ENCODE measurements at regions of chr4 and their contacts with region 1.

Region 1: DNA sequence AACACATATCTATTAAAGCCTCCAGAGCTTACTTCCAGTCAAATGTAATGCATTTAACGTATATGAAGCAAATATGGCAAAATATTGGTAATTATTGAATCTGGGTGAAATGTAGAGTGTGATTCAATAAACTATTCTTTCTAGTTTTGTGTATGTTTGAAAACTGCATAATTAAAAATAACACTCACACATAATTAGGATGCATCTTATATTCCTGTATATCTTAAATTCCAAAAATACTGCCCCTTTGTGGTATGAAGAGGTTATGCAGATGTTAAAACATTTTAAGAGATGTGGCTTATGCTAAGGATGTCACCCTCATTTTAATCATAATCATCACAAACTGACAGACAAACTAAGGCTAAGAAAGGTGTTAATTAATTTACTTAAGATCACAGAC is 182.9 kb downstream of the COX18 start:
- DNase-seq: peak; percentile 21
- H3K4me3 ChIP-seq: no peak overlapping the region
- H3K27ac ChIP-seq: no peak overlapping the region
- H3K4me1 ChIP-seq: no peaks in the 10 kb centered on the region
- H3K27me3 ChIP-seq: no peaks in the 10 kb centered on the region
- CTCF ChIP-seq: peak; percentile 4 to 25
- POLR2A ChIP-seq: no peak

Region 2: DNA sequence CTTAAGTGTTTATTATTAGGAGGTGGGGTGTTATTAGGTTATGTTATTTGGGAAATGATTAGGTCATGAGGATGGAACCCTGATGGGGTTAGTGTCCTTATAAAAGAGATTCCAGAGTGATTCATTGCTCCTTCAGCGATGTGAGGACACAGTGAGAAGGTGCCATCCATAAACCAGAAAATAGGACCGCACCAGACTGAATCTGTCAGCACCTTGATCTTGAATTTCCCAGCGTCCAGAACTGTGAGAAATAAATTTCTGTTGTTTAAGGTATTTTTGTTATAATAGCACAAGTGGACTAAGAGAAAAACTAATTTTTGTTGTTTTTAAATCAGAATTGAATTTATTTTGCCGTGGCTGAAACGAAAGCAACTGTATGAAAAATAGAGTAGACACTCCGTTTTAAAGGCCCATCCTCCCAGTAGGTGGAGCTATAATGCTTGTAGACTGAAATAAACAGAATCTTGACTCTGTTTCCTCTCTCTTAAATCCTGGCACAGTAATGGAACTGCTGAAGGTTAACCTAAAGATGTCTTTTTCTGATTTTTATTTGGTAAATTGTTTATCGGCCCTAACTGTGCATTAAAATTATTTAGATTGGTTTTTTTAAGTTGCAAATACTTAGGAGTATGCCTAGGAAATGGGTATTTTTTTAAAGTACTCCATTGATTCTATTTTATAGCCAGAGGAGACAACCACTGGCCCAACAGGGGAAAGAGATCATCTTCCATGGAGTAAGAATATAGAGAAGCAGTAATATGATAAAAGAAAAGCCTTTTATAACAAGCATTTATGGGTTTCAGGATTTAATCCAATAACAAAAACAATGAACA is 184.4 kb before region 1 on chr4:
- CTCF ChIA-PET with region 1: interaction called, 5 read pairs
- POLR2A ChIA-PET with region 1: no interaction called
- dilution Hi-C with region 1: no loop called
- intact Hi-C with region 1: loop called (anchors 5 kb)
- DNase-seq: peak; percentile 69
- H3K4me3 ChIP-seq: peak overlapping the region; percentile 30 to 85 (median 73)
- H3K27ac ChIP-seq: peak overlapping the region; percentile 1
- H3K4me1 ChIP-seq: no peaks in the 10 kb centered on the region
- H3K27me3 ChIP-seq: no peaks in the 10 kb centered on the region
- CTCF ChIP-seq: peak; percentile 30 to 47
- POLR2A ChIP-seq: no peak